ENCODE measurements at regions of chr15 and their contacts with region 1.

Region 1: GRCh38 chr15:38707802-38708671 is 143.4 kb upstream of the RASGRP1 start:
- DNase-seq: peak in 1 of 2 experiments; percentile 43
- H3K4me3 ChIP-seq: no peak overlapping the region
- H3K27ac ChIP-seq: no peak overlapping the region
- H3K4me1 ChIP-seq: peaks cover 3% of the 10 kb centered on the region
- H3K27me3 ChIP-seq: no peaks in the 10 kb centered on the region
- CTCF ChIP-seq: peak; percentile 77

Region 2: GRCh38 chr15:38545179-38545578 is 162.9 kb before region 1 on chr15:
- CTCF ChIA-PET with region 1: no interaction called
- POLR2A ChIA-PET with region 1: no interaction called
- intact Hi-C with region 1: no loop called
- DNase-seq: no peak
- H3K4me3 ChIP-seq: no peak overlapping the region
- H3K27ac ChIP-seq: no peak overlapping the region
- H3K4me1 ChIP-seq: no peaks in the 10 kb centered on the region
- H3K27me3 ChIP-seq: no peaks in the 10 kb centered on the region
- CTCF ChIP-seq: no peak

Region 3: DNA sequence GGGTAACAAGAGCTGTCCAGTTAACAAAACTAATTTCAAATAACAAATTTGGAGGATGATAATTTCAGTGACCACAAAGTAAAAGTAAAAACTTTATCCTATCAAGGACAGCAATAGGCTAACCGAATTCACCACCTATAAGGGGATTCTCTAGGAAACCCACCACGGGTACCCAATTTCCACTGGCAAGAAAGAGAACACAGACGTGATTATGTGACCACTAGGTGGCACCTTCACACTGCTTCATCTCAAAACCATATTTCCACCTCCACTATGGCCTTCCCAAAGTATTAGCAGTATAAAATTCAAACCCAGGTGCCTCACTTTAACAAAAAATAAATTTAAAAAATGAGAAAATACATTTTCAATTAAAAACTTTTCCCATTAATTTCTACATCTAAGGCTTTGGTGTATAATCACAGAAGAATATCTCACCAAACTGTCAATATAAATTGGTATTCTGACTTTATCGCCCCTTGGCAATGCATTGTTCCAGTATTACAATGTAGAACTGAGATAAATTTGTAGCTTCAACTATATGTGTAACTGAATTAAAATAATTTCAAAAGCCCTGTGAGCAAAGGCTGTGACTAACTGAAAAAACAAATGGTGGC is 978.1 kb after region 1 on chr15:
- CTCF ChIA-PET with region 1: no interaction called
- POLR2A ChIA-PET with region 1: no interaction called
- intact Hi-C with region 1: loop called (anchors 5 kb)
- DNase-seq: peak in 1 of 2 experiments; percentile 34
- H3K4me3 ChIP-seq: no peak overlapping the region
- H3K27ac ChIP-seq: no peak overlapping the region
- H3K4me1 ChIP-seq: no peaks in the 10 kb centered on the region
- H3K27me3 ChIP-seq: no peaks in the 10 kb centered on the region
- CTCF ChIP-seq: peak; percentile 82